Dorsolateral prefrontal cortex (tissue), 120 donors: ENCODE measurements at regions of chr3 and their contacts with region 1.

Region 1: GRCh38 chr3:69739204-69740102 is at the start of gene MITF:
- DNase-seq: peak; percentile 79 to 96 (median 94)
- H3K4me3 ChIP-seq: peak within 1 kb of the TSS; percentile 60 to 99 (median 92)
- H3K27ac ChIP-seq: peak within 1 kb of the TSS in 53 of 59 donors; percentile 17 to 89 (median 75)
- H3K27me3 ChIP-seq: peaks cover 0 to 12% (median 0%) of the 10 kb centered on the region in 45 donors
- CTCF ChIP-seq: peak in 26 of 56 donors; percentile 11 to 51 (median 28)
- total RNA-seq, gene MITF: 4.7 to 23.9 (median 11.8) TPM

Region 2: GRCh38 chr3:69602112-69602511 is 137.3 kb before region 1 on chr3:
- intact Hi-C with region 1: no loop called
- DNase-seq: no peak
- H3K4me3 ChIP-seq: no peak overlapping the region
- H3K27ac ChIP-seq: no peak overlapping the region
- H3K27me3 ChIP-seq: peaks cover 0 to 8% (median 0%) of the 10 kb centered on the region in 45 donors
- CTCF ChIP-seq: no peak

Region 3: GRCh38 chr3:69776920-69777581 is 37.6 kb after region 1 on chr3:
- intact Hi-C with region 1: loop called in 1 of 2 experiments (anchors 5 kb)
- DNase-seq: no peak
- H3K4me3 ChIP-seq: no peak overlapping the region
- H3K27ac ChIP-seq: no peak overlapping the region
- H3K27me3 ChIP-seq: no peaks in the 10 kb centered on the region
- CTCF ChIP-seq: no peak

Region 4: GRCh38 chr3:69842789-69843188 is 103.3 kb after region 1 on chr3:
- intact Hi-C with region 1: loop called in 1 of 2 experiments (anchors 10 kb)
- DNase-seq: no peak
- H3K4me3 ChIP-seq: no peak overlapping the region
- H3K27ac ChIP-seq: no peak overlapping the region
- H3K27me3 ChIP-seq: no peaks in the 10 kb centered on the region
- CTCF ChIP-seq: no peak